ENCODE measurements at regions of chr19 and their contacts with region 1.

Region 1: DNA sequence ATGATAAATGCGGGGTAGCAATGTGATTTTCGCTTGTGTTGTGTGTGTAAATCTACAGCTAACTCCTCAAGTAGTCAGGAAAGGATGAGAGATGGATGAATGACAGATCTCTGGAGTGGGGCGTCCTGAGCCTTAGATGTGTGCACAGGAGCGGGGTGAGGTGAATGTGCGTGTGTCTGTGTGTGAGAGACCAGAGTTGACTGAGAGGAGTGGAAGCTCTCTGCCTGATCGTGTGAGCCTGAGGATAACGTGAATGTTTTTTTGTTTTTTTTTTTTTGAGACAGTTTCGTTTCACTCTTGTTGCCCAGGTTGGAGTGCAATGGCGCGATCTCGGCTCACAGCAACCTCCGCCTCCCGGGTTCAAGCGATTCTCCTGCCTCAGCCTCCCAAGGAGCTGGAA is 805 bp downstream of the ZNF461 start:
- DNase-seq: no peak
- ATAC-seq: no peak
- H3K4me3 ChIP-seq: peak overlapping the region; percentile 47 to 96 (median 78)
- H3K27ac ChIP-seq: peak overlapping the region in 1 of 12 donors; percentile 83
- H3K4me1 ChIP-seq: peaks cover 3 to 21% (median 16%) of the 10 kb centered on the region in 12 donors
- H3K27me3 ChIP-seq: no peaks in the 10 kb centered on the region
- CTCF ChIP-seq: no peak
- POLR2A ChIP-seq: no peak

Region 2: DNA sequence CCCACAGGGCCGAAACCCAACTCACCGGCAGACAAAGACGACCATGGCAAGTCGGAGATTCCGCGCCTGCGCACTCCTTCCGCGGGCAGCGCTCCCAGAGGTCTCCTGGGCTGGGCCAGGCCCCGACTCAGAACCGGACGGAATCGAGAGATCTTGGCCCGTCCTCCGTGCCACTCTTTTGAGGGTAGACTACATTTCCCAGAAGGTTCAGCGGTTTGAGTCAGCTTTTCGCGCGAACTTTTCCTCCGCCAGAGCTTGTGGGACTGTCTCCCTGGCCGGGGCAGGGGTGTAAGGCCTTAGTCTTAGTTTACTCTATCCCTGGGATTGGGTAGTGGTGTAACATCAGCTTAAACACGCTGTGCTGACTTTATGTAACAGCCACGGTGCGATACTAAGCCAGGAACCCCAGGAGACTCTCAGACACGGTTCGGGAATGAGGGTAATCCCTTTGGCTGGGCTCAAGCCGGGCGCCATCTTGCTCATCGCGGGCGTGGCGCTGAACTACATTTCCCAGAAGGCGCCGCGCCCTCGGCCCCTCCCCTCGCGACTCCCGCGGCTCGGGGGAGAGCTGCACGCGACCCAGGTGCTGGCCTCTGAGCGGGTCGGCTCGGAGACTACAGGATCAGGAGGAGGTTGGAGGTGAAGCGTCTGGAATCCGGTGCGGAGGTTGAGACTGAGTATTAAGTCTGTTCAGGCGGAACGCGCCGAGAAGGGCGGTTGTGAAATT is 137.5 kb before region 1 on chr19 and contains the start of gene ZNF260:
- intact Hi-C with region 1: loop called in 1 of 10 experiments (anchors 10 kb)
- DNase-seq: peak; percentile 97 to 99 (median 98)
- ATAC-seq: peak; percentile 99
- H3K4me3 ChIP-seq: peak within 1 kb of the TSS; percentile 40 to 89 (median 74)
- H3K27ac ChIP-seq: peak within 1 kb of the TSS; percentile 73 to 99 (median 94)
- H3K4me1 ChIP-seq: peaks cover 0 to 26% (median 15%) of the 10 kb centered on the region in 12 donors
- H3K27me3 ChIP-seq: no peaks in the 10 kb centered on the region
- CTCF ChIP-seq: peak in 3 of 12 donors; percentile 10 to 19 (median 16)
- POLR2A ChIP-seq: peak in 1 of 2 donors; percentile 48
- total RNA-seq, gene ZNF260: 5.2 to 13.7 (median 8.5) TPM

Region 3: GRCh38 chr19:36605101-36605876 is 60.5 kb before region 1 on chr19 and contains the start of gene ZNF382:
- intact Hi-C with region 1: loop called in 1 of 10 experiments (anchors 5 kb)
- DNase-seq: peak; percentile 85 to 93 (median 89)
- ATAC-seq: peak; percentile 94 to 97 (median 96)
- H3K4me3 ChIP-seq: peak within 1 kb of the TSS; percentile 63 to 90 (median 84)
- H3K27ac ChIP-seq: peak within 1 kb of the TSS; percentile 14 to 95 (median 88)
- H3K4me1 ChIP-seq: peaks cover 0 to 21% (median 9%) of the 10 kb centered on the region in 12 donors
- H3K27me3 ChIP-seq: no peaks in the 10 kb centered on the region
- CTCF ChIP-seq: no peak
- POLR2A ChIP-seq: peak; percentile 46 to 66
- total RNA-seq, gene ZNF382: 12.0 to 21.2 (median 15.7) TPM

Region 4: GRCh38 chr19:36687214-36688056 is 21.6 kb after region 1 on chr19 and contains the start of gene ZNF567:
- intact Hi-C with region 1: loop called in 1 of 10 experiments (anchors 2 kb)
- DNase-seq: peak; percentile 98 to 99 (median 98)
- ATAC-seq: peak; percentile 99 to 100 (median 99)
- H3K4me3 ChIP-seq: peak within 1 kb of the TSS; percentile 59 to 91 (median 80)
- H3K27ac ChIP-seq: peak within 1 kb of the TSS in 11 of 12 donors; percentile 53 to 82 (median 73)
- H3K4me1 ChIP-seq: peaks cover 0 to 20% (median 14%) of the 10 kb centered on the region in 12 donors
- H3K27me3 ChIP-seq: no peaks in the 10 kb centered on the region
- CTCF ChIP-seq: no peak
- POLR2A ChIP-seq: peak in 1 of 2 donors; percentile 89
- total RNA-seq, gene ZNF567: 2.9 to 5.8 (median 3.9) TPM

Region 5: DNA sequence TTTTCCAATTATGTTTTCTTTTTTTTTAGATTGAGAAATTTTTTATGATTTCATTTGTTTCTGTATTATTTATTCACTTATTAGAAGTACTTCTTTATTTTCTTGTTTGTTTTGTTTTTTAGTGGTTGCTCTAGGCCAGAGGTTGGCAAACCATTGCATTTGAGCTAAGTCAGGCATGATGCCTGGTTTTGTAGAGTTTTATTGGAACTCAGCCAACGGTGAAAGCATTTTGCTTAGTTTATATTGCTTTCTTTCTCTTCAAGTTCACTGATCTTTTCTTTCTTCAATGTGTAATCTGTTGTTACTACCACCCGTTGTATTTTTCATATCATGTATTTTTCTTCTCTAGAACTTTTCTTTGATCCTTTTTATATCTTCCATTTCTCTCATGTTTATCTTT is 41.3 kb after region 1 on chr19:
- intact Hi-C with region 1: no loop called
- DNase-seq: no peak
- ATAC-seq: no peak
- H3K4me3 ChIP-seq: no peak overlapping the region
- H3K27ac ChIP-seq: no peak overlapping the region
- H3K4me1 ChIP-seq: no peaks in the 10 kb centered on the region
- H3K27me3 ChIP-seq: no peaks in the 10 kb centered on the region
- CTCF ChIP-seq: no peak
- POLR2A ChIP-seq: no peak

Region 6: GRCh38 chr19:36837906-36838783 is 172.3 kb after region 1 on chr19 and contains the start of gene ZNF790:
- intact Hi-C with region 1: loop called in 1 of 10 experiments (anchors 5 kb)
- DNase-seq: peak; percentile 91 to 92 (median 91)
- ATAC-seq: peak; percentile 98 to 99 (median 99)
- H3K4me3 ChIP-seq: peak within 1 kb of the TSS; percentile 27 to 92 (median 73)
- H3K27ac ChIP-seq: peak within 1 kb of the TSS; percentile 69 to 98 (median 92)
- H3K4me1 ChIP-seq: peaks cover 0 to 32% (median 15%) of the 10 kb centered on the region in 12 donors
- H3K27me3 ChIP-seq: no peaks in the 10 kb centered on the region
- CTCF ChIP-seq: no peak
- POLR2A ChIP-seq: peak in 1 of 2 donors; percentile 21
- total RNA-seq, gene ZNF790: 3.4 to 13.0 (median 8.5) TPM